BJ (cell line): ENCODE measurements at regions of chr1 and their contacts with region 1.

Region 1: DNA sequence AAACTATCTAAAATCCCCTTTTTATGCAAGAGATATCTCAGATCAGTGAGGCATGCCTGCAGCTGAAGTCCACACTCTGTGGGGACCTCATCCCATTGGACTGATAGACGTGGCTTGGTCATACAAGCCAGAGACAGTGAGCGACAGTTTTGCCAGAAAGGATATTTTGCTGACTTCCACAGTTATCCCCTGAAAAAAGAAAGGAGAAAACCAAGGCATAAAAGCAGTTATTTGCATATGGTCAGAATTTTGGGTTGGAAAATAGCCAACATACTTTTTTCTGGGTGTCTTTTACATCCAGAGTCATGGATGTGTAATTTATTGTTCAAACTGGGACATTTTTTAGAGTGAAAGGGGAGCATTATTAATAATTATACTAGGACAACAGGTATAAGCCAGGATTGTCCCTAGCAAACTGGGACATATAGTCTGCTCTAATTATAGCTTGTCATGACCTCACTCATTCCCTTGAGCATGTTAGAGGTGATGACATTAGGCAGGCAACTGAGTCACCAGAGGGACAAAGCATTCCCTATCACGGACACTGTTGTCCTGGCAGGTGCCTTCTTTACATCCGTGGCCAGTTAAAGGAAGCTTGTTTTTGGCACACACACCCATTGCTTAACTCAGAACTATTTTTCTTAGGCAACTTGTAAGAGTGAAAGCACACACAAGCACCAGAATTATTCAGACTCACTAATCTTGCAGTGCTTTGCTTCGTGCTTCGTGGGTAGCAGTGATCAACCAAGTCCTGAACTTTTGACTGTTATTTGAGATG is 65.5 kb downstream of the PRRX1 start:
- DNase-seq: no peak
- H3K4me3 ChIP-seq: no peak overlapping the region
- H3K27me3 ChIP-seq: no peaks in the 10 kb centered on the region
- CTCF ChIP-seq: no peak

Region 2: DNA sequence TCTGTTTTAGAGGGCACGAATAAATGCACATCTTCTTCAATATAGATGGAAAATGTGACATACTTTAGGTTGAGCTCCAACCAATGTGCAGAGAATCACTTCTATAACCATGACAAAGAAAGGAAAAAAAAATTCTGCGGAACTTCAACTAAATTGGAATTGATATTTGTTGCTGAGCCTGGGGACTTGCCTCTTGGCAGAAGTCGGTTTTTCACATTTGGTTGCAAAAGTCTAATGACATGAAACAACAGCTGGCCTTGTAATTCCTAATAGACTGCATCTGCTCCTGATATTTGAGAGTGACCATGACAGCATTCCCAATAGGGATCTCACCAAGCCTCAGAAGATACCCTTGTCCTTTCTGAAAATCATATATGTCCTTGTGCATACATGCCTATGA is 47.4 kb after region 1 on chr1:
- CTCF ChIA-PET with region 1: no interaction called
- POLR2A ChIA-PET with region 1: interaction called, 18 read pairs
- DNase-seq: no peak
- H3K4me3 ChIP-seq: no peak overlapping the region
- H3K27me3 ChIP-seq: no peaks in the 10 kb centered on the region
- CTCF ChIP-seq: no peak